ENCODE measurements at regions of chr13 and their contacts with region 1.

Region 1: DNA sequence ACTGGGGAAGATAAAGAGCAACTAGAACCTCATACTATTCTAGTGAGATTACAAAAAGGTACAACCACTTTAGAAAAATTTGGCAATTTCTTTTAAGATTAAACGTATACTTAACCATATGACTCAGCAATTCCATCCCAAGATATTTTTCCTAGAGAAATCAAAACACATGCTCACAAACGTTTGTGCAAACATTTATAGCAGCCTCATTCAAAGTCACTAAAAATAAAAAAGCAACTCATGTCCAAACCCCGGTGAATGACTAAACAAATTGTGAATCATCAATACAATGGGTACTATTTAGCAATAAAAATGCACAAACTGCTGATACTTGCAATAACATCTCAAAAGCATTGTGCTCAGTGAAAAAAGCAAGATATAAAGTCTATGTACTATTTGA is 121.5 kb downstream of the FRY start:
- DNase-seq: peak; percentile 73
- H3K4me3 Mint-ChIP-seq: no peak overlapping the region
- H3K27ac Mint-ChIP-seq: no peak overlapping the region
- H3K4me1 Mint-ChIP-seq: peaks cover 9% of the 10 kb centered on the region
- H3K27me3 Mint-ChIP-seq: no peaks in the 10 kb centered on the region
- CTCF ChIP-seq: no peak

Region 2: DNA sequence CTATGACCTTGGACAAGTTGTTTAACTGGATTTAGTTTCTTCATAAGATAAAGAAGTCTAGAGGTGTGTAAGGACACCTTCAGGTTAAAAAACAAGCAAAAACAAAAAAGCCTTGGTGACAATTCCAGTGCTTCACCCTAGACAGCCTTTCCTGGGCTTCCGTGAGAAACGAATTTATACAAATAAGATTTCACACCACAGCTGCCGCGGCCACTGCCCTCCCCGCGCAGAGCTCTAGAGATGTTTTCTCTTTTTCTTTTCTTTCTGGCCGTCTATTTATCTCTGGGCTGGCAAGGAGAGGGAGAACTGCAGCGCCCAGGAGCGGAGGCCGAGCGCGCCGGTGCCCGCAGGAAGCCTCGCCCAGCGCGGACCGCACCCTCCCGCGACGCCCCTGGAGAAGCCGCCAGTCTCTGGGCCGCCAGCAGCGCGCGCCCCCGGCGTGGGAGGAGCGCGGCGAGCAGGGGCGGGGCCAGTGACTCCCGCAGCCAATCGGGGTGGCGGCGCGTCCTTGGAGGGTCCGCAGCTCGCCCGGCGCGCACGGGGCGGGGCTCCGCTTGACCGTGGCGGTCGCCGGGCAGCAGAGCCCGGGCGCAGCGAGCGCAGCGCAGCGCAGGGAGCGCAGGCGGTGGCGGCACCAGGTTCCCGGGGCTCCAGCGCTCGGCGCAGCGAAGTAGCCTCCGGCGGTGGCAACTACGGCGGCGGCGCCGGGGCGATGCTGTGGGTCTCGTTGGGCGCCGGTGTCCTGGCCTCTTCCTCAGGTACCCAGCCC is 306.7 kb before region 1 on chr13:
- CTCF ChIA-PET with region 1: no interaction called
- POLR2A ChIA-PET with region 1: no interaction called
- intact Hi-C with region 1: no loop called
- DNase-seq: peak; percentile 87
- H3K4me3 Mint-ChIP-seq: peak overlapping the region; percentile 80
- H3K27ac Mint-ChIP-seq: no peak overlapping the region
- H3K4me1 Mint-ChIP-seq: no peaks in the 10 kb centered on the region
- H3K27me3 Mint-ChIP-seq: peaks cover 45% of the 10 kb centered on the region
- CTCF ChIP-seq: no peak

Region 3: DNA sequence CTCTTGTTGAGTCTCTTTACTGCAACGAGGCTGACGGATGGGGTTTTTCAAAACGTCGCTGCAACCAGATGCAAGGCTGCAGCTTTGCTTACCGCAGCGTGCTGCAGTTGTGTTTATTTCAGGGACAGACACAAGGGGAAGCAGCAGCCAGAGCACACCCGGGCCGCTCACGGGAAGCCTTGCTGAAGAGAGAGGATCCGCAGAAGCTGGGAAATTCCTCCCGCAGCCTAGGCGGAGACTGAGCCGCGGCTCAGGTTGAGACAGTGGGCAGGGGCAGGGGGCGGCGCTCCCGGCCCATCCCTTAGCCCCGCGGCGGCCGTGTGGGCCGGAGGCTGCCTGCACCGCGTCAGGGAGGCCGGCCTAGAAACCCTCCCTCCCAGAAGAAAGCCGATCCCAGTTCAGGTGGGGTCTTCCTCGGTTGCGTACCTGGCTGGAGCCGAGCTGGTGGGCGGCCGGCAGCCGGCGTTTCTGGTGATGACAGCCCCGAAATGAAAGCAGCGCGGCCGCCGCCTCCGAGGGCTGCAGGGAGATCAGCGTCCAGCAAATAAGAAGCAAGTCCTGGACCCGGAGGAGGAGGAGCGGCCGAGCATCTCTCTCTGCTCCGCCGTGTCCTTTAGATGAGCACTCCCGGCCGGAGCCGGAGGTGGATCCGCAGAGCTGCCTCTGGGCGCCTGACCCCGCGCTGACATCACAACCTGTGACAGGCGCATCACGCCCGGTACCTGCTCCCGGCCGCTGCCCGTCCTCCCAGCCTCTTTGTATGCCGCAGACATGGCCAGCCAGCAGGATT is 121.8 kb before region 1 on chr13 and contains the start of gene FRY:
- CTCF ChIA-PET with region 1: no interaction called
- POLR2A ChIA-PET with region 1: no interaction called
- intact Hi-C with region 1: no loop called
- DNase-seq: peak; percentile 60
- H3K4me3 Mint-ChIP-seq: peak within 1 kb of the TSS; percentile 77
- H3K27ac Mint-ChIP-seq: no peak within 1 kb of the TSS
- H3K4me1 Mint-ChIP-seq: peaks cover 6% of the 10 kb centered on the region
- H3K27me3 Mint-ChIP-seq: no peaks in the 10 kb centered on the region
- CTCF ChIP-seq: no peak
- total RNA-seq, gene FRY: 8.9 and 9.1 TPM in 2 replicates

Region 4: DNA sequence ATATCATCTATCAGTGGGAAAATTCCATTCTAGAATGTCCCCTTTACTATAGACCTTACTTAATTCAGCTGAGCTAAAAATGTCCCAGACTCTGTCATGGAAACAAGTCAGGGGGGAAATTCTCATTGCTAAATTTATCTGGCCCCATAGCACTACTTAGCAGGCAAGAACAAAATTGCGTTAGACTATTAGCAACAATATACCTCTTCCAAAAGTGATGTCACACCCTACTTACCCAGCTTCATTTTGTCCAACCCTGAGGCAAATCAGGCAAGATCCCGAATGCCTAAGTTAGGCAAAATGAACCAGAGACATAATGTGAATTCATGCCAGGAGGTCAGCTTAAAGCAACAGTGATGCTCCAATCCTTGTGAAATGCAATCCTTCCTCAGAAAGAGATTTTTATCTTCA is 27.8 kb before region 1 on chr13:
- CTCF ChIA-PET with region 1: no interaction called
- POLR2A ChIA-PET with region 1: no interaction called
- intact Hi-C with region 1: loop called (anchors 2 kb)
- DNase-seq: peak; percentile 95
- H3K4me3 Mint-ChIP-seq: peak overlapping the region; percentile 16
- H3K27ac Mint-ChIP-seq: peak overlapping the region; percentile 64
- H3K4me1 Mint-ChIP-seq: peaks cover 5% of the 10 kb centered on the region
- H3K27me3 Mint-ChIP-seq: no peaks in the 10 kb centered on the region
- CTCF ChIP-seq: no peak